HEK293T (cell line): ENCODE measurements at regions of chr17 and their contacts with region 1.

Region 1: DNA sequence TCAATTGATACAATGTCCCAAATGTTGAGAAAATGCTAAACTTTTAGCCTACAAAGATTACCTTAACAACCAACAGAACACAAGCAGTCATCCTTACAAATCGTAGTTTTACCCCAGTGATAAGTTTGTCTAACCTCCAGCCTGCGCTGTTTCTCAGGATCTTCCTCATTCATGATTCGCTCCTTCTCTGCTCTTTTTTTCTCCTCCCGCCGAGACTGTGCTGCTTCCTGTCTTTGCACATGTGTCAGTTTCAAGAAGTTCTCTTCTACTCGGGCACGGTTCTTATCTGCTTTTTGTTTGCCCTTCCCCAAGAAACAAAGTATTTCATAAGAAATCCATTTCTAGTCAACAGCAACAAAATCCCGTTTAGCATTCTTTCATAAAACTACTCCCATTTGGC is 10.2 kb upstream of the STRADA start:
- DNase-seq: no peak

Region 2: GRCh38 chr17:63653050-63653449 is 98.8 kb before region 1 on chr17:
- CTCF ChIA-PET with region 1: interaction called, 12 read pairs
- POLR2A ChIA-PET with region 1: no interaction called
- DNase-seq: no peak

Region 3: GRCh38 chr17:63697341-63698286 is 54.2 kb before region 1 on chr17:
- CTCF ChIA-PET with region 1: interaction called, 13 read pairs
- POLR2A ChIA-PET with region 1: no interaction called
- DNase-seq: peak; percentile 68

Region 4: DNA sequence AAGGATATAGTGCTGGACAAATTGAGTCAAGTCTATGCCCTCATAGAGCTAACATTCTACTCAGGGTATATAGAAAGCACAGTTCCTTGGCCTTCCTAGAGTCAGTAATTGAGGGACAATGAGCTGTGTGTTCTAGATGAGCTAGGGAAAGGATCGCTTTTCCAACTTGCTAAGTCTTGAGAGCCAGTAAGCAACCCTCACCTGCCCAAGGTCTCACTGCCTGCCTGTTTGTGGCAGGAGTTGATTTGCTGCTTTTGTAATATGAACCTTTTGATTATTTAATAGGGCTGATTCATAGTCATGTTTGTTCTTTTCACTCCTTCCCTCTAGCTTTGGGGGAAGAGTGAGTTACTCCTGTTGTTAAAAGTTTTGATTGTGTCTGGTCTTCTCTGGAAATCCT is 28.7 kb after region 1 on chr17:
- CTCF ChIA-PET with region 1: no interaction called
- POLR2A ChIA-PET with region 1: no interaction called
- DNase-seq: no peak